Stomach (tissue), 19 donors: ENCODE measurements at regions of chr1 and their contacts with region 1.

Region 1: DNA sequence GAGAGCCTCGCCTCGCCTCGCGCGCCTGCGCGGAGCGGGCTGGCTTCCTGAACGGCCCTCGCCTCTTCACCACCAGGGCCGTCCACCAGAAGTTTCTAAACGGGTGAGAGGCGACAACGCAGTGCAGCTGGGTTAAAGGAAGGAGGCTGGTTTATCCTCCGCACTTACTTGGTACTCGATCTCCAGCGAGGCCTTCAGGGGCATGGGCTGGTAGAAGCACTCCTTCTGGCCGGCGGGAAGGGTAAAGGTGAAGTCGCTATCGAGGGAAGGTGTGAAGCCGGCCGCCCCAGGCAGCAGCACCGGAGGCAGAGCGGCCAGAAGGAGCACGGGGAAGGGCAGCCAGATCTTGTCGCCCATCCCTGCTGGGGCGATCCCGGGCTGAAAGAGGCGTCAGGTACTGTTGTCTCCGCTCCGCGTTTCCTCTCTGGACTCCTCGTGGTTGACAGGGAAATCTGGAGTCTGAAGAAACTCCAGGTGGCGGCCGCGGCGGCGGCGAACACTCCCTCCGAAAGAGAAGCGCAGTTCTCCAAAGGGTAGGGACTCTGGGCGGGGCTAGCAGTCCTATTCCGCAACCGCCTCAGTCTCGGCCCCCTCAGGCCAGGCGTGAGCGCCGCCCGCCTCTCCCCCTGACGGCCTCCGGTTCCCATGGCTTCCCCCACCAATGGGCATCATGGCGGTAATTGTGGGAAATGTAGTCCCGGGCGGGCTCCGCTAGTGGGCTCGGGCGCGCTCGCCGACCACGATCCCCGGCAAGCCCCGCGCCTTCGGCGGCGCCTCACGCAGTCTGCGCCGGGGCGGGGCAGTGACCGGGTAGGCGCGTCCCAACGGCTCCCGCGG is at the start of gene TMED5:
- DNase-seq: peak; percentile 97 to 100
- H3K4me3 ChIP-seq: peak within 1 kb of the TSS; percentile 60 to 85 (median 76)
- H3K27ac ChIP-seq: peak within 1 kb of the TSS; percentile 98 to 100 (median 99)
- H3K4me1 ChIP-seq: peaks cover 3 to 52% (median 35%) of the 10 kb centered on the region in 4 donors
- H3K27me3 ChIP-seq: no peaks in the 10 kb centered on the region
- CTCF ChIP-seq: peak in 2 of 7 experiments; percentile 11 to 32
- EP300 ChIP-seq: no peak
- POLR2A ChIP-seq: peak in 2 of 4 donors; percentile 81 to 92
- total RNA-seq, gene TMED5: 11.7 to 85.6 (median 22.3) TPM

Region 2: DNA sequence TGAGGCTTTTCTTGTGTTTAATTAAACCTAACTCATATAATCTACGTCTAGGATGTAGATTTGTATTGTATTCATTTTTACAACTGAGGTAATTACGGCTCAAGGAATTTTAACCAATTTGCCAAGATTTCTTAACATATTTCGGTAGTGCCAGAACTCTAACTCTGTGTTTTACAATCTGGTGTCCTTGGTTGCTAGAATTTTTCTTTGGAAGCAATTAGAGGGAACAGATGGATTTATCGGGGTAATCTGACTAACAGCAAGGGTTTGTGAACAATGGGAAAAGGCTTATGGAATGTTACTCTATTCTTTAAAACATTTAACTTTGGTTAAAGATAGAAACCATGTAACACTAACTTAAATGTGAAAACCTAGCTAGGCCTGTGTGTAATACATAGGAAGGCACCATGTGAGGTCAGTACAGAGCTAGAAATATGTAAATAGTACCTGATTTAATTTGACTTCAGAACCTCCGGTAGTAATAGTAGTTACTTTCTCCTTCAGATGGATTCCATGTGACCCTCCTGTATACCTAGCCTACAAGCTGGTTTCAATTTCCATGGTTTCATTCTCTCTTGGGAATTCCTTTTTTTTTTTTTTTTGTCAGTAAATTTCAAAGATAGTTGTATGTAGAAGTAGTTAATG is 99.8 kb before region 1 on chr1:
- intact Hi-C with region 1: loop called (anchors 10 kb)
- DNase-seq: peak in 1 of 2 donors; percentile 85
- H3K4me3 ChIP-seq: peak overlapping the region; percentile 83 to 96 (median 90)
- H3K27ac ChIP-seq: peak overlapping the region in 4 of 5 donors; percentile 86 to 91 (median 89)
- H3K4me1 ChIP-seq: peaks cover 17 to 47% (median 33%) of the 10 kb centered on the region in 4 donors
- H3K27me3 ChIP-seq: no peaks in the 10 kb centered on the region
- CTCF ChIP-seq: peak in 3 of 7 experiments; percentile 23 to 43 (median 35)
- EP300 ChIP-seq: no peak
- POLR2A ChIP-seq: no peak

Region 3: DNA sequence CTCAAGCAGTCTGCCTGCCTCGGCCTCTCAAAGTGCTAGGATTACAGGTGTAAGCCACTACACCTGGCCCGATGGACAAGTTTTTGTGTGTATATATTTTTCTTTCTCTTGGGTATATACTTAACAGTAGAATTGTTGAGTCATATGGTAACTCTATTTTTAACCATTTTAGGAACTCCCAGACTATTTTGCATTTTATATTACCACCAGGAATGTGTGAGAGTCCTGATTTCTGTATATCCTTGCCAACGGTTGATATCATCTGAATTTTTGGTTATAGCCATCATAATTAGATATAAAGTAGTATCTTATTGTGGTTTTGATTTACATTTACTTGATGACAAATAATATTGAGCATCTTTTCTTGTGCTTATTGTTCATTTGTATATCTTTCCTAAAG is 288.6 kb after region 1 on chr1:
- intact Hi-C with region 1: no loop called
- DNase-seq: no peak
- H3K4me3 ChIP-seq: no peak overlapping the region
- H3K27ac ChIP-seq: no peak overlapping the region
- H3K4me1 ChIP-seq: peaks cover 7 to 16% (median 14%) of the 10 kb centered on the region in 4 donors
- H3K27me3 ChIP-seq: no peaks in the 10 kb centered on the region
- CTCF ChIP-seq: no peak
- EP300 ChIP-seq: no peak
- POLR2A ChIP-seq: no peak